ENCODE measurements at regions of chr16 and their contacts with region 1.

Region 1: DNA sequence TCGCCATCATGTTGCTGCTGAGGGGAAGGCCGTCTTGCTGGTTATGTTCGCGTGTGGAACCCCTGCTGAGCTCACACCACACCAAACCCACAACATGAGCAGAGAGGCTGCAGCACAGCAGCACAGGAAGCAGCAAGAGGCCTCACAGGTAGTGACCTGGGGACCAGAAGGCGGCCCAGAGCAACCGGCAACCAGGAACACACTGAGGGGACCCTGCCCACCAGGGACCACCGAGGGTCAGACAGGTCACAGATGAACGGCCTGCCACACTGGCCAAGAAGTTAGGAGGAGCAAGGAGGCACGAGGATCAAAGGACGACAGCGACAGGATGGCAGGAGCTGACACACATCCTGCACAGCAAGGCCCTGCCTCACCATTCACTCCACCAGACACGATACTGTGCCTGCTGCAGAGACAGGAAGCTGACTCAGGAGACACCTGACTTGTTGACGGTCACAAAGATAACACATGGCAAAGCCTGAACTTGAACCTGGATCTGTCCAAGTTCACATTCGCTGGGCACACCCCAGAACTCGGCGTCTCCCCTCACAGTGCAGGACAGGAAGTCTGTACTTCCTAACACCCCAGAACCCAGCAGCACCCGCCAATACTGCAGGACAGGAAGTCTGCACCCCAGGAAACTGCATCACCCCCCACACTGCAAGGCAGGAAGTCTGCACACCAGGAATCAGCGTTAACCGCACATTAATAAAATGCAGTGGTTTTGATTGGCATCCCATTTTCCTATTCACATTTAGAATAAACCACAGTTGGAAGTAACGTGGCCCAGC is 98.5 kb downstream of the ZNF778 start:
- DNase-seq: peak; percentile 87
- H3K4me3 Mint-ChIP-seq: peak overlapping the region; percentile 70
- H3K27ac Mint-ChIP-seq: peak overlapping the region; percentile 99
- H3K4me1 Mint-ChIP-seq: peaks cover 95% of the 10 kb centered on the region
- H3K27me3 Mint-ChIP-seq: no peaks in the 10 kb centered on the region

Region 2: DNA sequence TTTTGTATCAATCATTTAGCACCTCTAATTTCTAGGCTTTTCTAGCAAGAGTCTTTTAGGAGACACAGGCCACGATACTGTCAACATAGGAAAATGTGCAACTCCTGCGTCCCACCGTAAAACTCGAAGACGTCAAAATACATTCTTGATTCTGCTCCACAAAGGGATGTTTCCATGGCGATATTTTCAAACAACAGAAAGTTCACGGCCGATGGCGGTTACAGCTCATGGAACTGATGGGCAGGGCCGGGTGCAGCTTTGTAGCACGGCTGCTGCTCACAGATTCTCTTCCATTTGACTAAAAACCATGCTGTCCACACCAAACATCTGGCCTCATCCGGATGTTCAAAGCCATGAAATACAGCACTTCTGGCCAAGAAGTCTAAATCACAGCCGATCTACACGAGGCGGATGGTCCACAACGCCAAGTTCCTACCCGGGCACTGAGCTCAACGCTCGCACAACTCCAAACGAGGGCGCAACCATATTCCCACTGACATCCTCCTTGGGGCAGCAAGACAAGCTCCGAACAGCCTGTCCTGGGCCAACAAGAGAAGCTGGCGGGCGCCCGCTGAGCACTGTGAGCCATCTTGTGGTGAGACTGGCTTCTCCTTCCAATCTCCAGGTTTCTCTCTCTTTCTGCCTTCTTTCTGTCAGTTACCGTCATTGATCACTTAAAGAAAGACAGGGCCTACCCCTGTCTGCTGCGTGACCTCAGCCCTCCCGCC is 18.7 kb before region 1 on chr16:
- CTCF ChIA-PET with region 1: interaction called, 4 read pairs
- POLR2A ChIA-PET with region 1: interaction called, 17 read pairs
- DNase-seq: no peak
- H3K4me3 Mint-ChIP-seq: peak overlapping the region; percentile 24
- H3K27ac Mint-ChIP-seq: peak overlapping the region; percentile 64
- H3K4me1 Mint-ChIP-seq: peaks cover 43% of the 10 kb centered on the region
- H3K27me3 Mint-ChIP-seq: no peaks in the 10 kb centered on the region

Region 3: DNA sequence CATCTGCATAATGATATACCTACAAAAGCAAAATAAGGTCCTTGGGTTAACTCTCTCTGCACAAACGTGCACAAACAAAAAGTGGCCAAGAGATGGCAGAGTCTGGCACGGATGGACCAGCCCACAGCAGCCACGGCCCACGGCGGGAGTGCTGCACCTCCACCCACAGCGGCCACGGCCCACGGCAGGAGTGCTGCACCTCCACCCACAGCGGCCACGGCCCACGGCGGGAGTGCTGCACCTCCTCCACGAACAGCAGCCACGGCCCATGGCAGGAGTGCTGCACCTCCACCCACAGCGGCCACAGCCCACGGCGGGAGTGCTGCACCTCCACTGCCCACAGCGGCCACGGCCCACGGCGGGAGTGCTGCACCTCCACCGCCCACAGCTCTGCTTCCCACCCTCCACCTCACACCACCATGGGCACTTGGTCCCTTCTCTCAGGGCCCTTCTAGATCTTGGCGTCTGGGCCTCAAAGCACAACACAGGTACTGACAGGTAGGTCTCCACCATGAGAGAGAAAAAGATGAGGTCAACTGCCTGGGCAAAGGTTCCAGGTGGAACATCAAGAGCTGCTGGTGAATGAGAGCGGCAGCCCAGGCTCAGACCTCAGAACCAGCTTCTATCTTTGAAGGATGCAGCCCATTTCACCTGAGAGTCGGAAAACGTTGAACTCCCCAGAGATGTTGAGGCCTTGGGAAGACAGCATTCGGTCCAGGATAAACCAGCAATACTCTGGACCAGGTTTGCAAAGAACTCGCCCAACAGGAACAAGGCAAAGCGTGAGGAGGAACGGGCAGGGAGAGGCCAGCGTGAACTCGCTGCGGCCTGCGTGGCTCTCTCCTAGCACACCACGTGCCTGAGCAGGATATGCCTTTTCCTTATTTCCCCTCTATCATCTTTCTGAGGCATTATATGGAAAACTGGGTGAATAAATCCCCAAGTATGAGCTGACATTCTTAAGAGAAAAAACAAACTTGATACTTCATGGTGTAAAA is 26.0 kb after region 1 on chr16:
- CTCF ChIA-PET with region 1: no interaction called
- POLR2A ChIA-PET with region 1: no interaction called
- DNase-seq: no peak
- H3K4me3 Mint-ChIP-seq: no peak overlapping the region
- H3K27ac Mint-ChIP-seq: no peak overlapping the region
- H3K4me1 Mint-ChIP-seq: peaks cover 59% of the 10 kb centered on the region
- H3K27me3 Mint-ChIP-seq: no peaks in the 10 kb centered on the region

Region 4: DNA sequence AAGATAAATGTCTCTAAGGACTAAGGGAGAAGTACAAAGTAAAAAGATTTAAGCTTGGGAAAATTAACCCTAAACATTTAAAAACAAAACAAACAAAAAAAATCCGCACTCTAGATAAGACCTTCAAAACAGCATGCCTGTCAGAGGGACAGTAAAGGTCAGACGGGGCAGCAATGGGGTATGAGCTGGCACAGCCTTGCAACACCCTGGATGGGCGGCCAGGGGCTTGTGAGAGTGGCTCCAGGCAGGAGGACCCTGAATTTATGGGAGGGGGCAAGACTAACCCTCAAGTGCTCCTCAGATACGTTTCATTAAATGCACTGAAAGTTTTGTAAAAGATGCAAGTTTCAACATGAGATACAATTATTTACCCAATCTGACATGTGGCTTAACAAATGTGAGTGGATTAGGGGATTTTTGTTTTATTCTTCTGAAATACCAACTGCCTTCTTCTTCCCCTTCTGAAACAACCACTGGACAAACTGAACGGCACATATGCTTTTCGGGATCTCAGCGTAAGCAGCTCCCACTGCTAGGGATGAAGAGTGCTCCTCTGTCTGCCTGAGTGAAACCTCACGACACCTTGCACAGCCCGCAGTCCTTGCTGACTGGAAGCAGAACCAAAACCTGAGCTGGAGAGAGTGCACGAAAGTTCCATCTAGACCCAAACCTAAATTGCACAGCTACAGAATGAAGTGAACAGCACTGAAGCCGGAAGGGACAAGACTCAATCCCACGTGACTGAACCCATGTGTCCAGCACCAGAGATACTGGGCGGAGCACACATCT is 46.0 kb after region 1 on chr16:
- CTCF ChIA-PET with region 1: interaction called, 3 read pairs
- POLR2A ChIA-PET with region 1: interaction called, 12 read pairs
- DNase-seq: peak; percentile 39
- H3K4me3 Mint-ChIP-seq: peak overlapping the region; percentile 65
- H3K27ac Mint-ChIP-seq: peak overlapping the region; percentile 94
- H3K4me1 Mint-ChIP-seq: peaks cover 99% of the 10 kb centered on the region
- H3K27me3 Mint-ChIP-seq: no peaks in the 10 kb centered on the region

Region 5: DNA sequence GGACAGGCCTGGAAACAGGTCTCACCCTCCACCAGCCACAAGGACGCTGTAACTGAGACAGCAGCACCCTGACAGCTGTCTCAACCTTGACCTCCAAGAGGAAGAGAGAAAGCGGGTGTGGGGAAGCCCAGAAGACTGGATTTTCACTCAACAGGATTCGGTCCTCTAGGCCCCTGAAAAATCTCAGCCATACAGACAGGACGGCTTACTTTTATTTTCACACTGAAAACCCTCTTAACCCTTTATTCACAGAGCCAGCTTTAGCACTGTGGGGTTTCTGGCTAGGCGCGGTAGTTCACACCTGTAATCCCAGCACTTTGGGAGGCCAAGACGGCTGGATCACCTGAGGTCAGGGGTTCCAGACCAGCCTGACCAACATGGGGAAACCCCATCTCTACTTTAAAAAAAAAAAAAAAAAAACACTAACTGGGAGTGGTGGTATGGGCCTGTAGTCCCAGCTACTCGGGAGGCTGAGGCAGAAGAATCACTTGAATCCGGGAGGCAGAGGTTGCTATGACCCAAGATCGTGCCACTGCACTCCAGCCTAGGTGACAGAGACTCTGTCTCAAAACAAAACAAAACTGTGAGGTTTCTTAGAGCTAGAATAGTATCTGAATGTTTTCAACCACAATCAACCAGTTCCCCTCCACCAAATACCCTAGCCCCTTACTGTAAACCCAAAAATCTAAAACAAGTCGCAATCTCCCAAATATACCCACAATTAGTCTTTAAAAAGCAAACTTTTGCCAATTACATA is 169.1 kb after region 1 on chr16:
- CTCF ChIA-PET with region 1: interaction called, 3 read pairs
- POLR2A ChIA-PET with region 1: interaction called, 19 read pairs
- DNase-seq: peak; percentile 36
- H3K4me3 Mint-ChIP-seq: peak overlapping the region; percentile 60
- H3K27ac Mint-ChIP-seq: peak overlapping the region; percentile 75
- H3K4me1 Mint-ChIP-seq: peaks cover 81% of the 10 kb centered on the region
- H3K27me3 Mint-ChIP-seq: no peaks in the 10 kb centered on the region

Region 6: DNA sequence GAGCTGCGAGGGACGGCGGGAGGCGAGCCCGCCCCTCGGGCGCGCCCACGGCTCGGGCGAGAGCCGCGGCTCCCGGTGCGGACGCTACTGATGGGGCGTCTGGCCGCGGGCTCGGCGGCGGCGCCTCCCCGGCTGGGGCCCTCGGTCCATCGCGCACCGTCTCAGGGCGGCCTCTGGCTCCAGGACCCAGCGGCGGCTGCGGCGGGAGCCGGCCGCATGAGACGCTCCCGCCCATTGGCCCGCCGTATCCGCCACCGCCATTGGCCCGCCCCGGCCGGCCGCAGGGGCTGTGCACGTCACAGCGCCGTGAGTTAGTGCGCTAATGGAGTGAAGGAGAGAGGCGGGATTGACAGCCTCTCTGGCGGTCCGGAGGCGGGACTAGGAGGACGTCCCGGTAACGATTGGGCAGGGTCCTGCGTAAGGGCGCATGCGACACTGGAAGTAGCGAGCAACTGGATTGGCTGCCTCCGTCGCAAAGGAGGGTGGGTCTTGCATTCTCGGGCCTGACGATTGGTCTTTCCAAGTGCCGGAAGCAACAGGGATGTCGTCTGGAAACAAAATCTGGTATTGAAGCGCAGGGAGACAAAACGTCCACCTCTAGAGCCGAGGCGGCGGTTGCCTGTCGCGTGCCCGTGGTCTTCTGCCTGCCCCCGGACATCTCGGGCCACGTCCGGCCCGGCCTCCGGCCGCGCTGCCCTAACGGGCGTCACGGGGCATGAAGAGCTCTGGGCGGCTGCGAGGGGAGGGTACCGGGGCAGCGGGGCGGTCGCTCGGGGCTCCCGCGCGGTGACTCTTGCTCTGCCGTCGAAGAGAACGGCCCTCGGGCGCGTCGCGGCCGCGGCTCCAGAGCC is 174.6 kb after region 1 on chr16 and contains the start of gene ANKRD11:
- CTCF ChIA-PET with region 1: no interaction called
- POLR2A ChIA-PET with region 1: interaction called, 19 read pairs
- DNase-seq: peak; percentile 99
- H3K4me3 Mint-ChIP-seq: peak within 1 kb of the TSS; percentile 92
- H3K27ac Mint-ChIP-seq: peak within 1 kb of the TSS; percentile 94
- H3K4me1 Mint-ChIP-seq: peaks cover 51% of the 10 kb centered on the region
- H3K27me3 Mint-ChIP-seq: no peaks in the 10 kb centered on the region
- total RNA-seq, gene ANKRD11: 199 to 208 TPM

Region 7: DNA sequence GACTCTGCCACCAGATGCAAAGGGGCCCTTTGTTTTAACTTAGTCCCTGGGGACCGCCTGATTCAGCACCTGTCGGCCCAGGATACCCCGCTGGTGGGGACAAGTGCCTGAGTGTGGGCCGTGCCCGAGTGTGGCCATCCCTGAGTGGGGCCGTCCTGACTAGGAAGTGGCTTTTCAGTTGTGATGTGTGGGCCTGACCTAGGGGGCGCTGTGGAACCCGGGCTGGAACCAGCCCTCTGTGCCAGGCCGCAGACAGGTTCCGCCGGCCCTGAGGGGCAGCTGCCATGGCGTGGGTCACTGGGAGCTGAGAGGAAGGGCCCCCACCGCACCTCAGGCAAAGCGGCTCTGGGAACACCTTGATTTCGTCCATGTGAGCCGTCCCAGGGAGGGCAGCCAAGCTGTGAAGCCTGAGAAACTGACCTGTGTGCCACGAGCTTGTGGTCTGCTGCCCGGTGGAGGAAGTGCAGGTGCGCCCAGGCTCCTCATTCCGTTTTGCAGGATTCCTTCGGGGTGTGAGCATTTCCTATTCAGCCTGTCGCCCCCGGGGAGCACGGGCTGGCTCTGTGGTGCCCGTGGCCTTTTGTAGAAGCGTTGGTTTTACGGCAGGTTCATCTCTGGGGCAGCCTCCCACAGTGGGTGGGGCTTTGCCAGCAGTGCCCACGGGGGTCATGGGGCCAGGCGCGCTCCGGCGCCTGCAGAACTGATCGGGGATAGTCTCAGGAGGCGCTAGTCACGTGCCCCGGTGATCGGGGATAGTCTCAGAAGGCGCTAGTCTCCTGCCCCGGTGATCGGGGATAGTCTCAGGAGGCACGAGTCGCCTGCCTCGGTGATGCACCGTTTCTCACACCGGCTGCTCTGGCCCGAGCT is 249.8 kb after region 1 on chr16:
- CTCF ChIA-PET with region 1: interaction called, 4 read pairs
- POLR2A ChIA-PET with region 1: interaction called, 11 read pairs
- DNase-seq: peak; percentile 69
- H3K4me3 Mint-ChIP-seq: peak overlapping the region; percentile 46
- H3K27ac Mint-ChIP-seq: peak overlapping the region; percentile 47
- H3K4me1 Mint-ChIP-seq: peaks cover 49% of the 10 kb centered on the region
- H3K27me3 Mint-ChIP-seq: no peaks in the 10 kb centered on the region